ENCODE measurements at regions of chr17 and their contacts with region 1.

Region 1: GRCh38 chr17:55452139-55452790 is 30.6 kb upstream of the MMD start:
- DNase-seq: peak; percentile 95
- ATAC-seq: peak; percentile 54
- H3K4me3 ChIP-seq: no peak overlapping the region
- H3K27ac ChIP-seq: peak overlapping the region; percentile 70
- H3K4me1 ChIP-seq: peaks cover 61% of the 10 kb centered on the region
- H3K27me3 ChIP-seq: no peaks in the 10 kb centered on the region
- CTCF ChIP-seq: no peak

Region 2: GRCh38 chr17:55366020-55366481 is 86.2 kb before region 1 on chr17:
- CTCF ChIA-PET with region 1: no interaction called
- POLR2A ChIA-PET with region 1: no interaction called
- intact Hi-C with region 1: no loop called
- DNase-seq: no peak
- ATAC-seq: no peak
- H3K4me3 ChIP-seq: no peak overlapping the region
- H3K27ac ChIP-seq: no peak overlapping the region
- H3K4me1 ChIP-seq: no peaks in the 10 kb centered on the region
- H3K27me3 ChIP-seq: peaks cover 10% of the 10 kb centered on the region; the same call in 1 of the 2 replicates
- CTCF ChIP-seq: no peak

Region 3: DNA sequence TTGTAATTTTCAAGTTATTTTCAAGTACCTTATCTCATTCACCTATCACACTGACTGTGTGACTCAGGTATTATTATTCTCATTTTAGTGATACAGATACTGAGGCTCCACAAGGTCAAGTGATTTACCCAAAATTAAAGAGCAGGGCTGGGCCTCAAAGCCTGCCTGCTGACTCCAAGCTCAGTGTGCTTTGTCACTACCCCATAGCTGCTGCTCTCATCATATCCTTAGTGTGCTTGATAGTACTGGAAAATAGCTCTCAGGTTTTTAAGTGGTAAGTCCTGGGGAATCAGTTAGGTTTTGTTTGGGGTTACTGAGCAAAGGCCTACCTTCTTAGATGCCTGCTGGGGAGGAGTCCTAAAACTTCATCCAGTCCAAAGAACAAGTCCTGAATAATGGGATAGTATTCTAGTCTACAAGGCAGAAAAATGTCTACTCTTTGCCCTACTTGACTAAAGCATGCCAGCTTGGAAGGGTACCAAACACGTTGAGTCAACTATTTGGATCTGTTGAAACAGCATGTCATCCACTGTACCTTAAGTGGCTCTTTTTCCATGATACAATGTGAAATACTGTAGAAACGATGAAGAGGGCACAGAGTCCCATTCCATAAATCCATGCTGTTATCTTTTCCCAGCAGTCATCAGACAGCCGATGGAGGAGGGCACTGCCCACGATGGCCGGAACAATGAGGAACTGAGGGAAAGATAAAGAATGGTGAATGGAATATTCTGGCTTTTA is 41.4 kb before region 1 on chr17:
- CTCF ChIA-PET with region 1: no interaction called
- POLR2A ChIA-PET with region 1: no interaction called
- intact Hi-C with region 1: loop called (anchors 2 kb)
- DNase-seq: peak; percentile 97
- ATAC-seq: peak; percentile 89
- H3K4me3 ChIP-seq: no peak overlapping the region
- H3K27ac ChIP-seq: peak overlapping the region; percentile 29
- H3K4me1 ChIP-seq: peaks cover 24% of the 10 kb centered on the region
- H3K27me3 ChIP-seq: no peaks in the 10 kb centered on the region
- CTCF ChIP-seq: no peak

Region 4: DNA sequence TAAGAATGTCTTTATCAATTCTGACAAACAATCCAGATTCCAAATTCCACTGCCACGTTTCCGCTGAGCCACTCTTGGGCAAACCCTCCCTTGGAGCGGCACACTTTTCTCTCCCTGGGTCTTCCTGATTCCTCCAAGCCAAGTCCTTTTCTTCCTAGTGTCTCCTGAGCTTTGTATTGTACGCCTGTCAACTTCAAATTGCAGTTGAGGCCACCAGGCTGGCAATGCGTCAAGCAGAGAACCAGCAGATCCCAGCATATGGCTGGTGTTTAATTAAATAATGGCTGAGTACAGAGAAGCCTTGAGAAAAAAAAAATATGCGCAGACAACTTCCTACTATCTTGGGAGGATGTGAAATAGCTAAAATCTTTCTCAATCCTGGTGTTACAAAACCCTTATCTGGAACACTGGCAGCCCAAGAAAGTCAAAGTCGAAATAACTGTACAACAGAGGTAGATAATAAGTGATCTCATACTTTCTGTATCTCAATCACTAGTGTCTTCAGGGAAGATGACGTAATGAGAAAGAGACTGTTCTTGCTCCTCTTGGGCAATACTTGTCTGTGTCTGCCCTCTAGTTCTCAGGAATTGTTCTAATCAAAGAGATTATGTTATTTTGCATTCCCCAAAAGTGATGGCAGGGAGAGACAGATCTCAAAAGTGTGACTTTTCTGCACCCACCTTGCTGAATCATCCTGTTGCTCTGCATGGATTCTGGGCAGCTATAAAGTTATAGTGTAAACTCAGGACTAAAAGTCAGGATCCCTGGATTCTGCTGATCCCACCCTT is 44.0 kb after region 1 on chr17:
- CTCF ChIA-PET with region 1: no interaction called
- POLR2A ChIA-PET with region 1: no interaction called
- intact Hi-C with region 1: loop called (anchors 1 kb)
- DNase-seq: no peak
- ATAC-seq: no peak
- H3K4me3 ChIP-seq: no peak overlapping the region
- H3K27ac ChIP-seq: no peak overlapping the region
- H3K4me1 ChIP-seq: peaks cover 16% of the 10 kb centered on the region
- H3K27me3 ChIP-seq: no peaks in the 10 kb centered on the region
- CTCF ChIP-seq: no peak

Region 5: GRCh38 chr17:55576996-55577586 is 124.8 kb after region 1 on chr17:
- CTCF ChIA-PET with region 1: no interaction called
- POLR2A ChIA-PET with region 1: no interaction called
- intact Hi-C with region 1: loop called (anchors 10 kb)
- DNase-seq: peak; percentile 71
- ATAC-seq: peak; percentile 62
- H3K4me3 ChIP-seq: peak overlapping the region; percentile 45
- H3K27ac ChIP-seq: peak overlapping the region; percentile 84
- H3K4me1 ChIP-seq: peaks cover 25% of the 10 kb centered on the region
- H3K27me3 ChIP-seq: no peaks in the 10 kb centered on the region
- CTCF ChIP-seq: no peak

Measured in PC-3 (cell line).